ENCODE measurements at regions of chr11 and their contacts with region 1.

Region 1: DNA sequence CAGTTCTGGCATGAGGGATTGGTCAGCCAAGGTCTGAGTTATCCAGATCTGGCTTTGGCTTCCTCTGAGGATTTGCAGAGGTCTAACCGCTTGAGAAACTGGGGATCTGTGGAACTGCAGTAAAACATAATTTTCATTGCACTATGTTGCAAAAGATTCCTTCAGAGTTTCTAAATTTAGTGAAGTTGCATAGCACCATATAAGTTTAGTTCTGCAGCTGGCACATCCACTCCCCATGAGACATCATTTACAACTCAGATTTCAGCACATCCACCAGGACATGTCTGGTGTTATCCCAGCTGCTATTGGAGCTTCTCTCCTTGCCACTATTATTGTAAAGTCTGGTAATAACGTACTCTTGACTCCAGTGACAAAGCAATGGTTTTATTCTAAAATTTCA is 181.5 kb downstream of the CWF19L2 start:
- DNase-seq: no peak
- H3K4me3 Mint-ChIP-seq: no peak overlapping the region
- H3K27ac Mint-ChIP-seq: no peak overlapping the region
- H3K4me1 Mint-ChIP-seq: no peaks in the 10 kb centered on the region
- H3K27me3 Mint-ChIP-seq: no peaks in the 10 kb centered on the region

Region 2: GRCh38 chr11:107293677-107294344 is 17.7 kb after region 1 on chr11:
- CTCF ChIA-PET with region 1: no interaction called
- intact Hi-C with region 1: loop called (anchors 2 kb)
- DNase-seq: no peak
- H3K4me3 Mint-ChIP-seq: no peak overlapping the region
- H3K27ac Mint-ChIP-seq: no peak overlapping the region
- H3K4me1 Mint-ChIP-seq: no peaks in the 10 kb centered on the region
- H3K27me3 Mint-ChIP-seq: no peaks in the 10 kb centered on the region